Psoas muscle (tissue), 8 donors: ENCODE measurements at regions of chr2 and their contacts with region 1.

Region 1: GRCh38 chr2:73156539-73157124 is 43.9 kb upstream of the RAB11FIP5 start:
- DNase-seq: peak; percentile 67 to 78
- ATAC-seq: peak; percentile 72 to 97 (median 88)
- H3K4me3 ChIP-seq: no peak overlapping the region
- H3K27ac ChIP-seq: no peak overlapping the region
- H3K4me1 ChIP-seq: no peaks in the 10 kb centered on the region
- H3K27me3 ChIP-seq: peaks cover 0 to 17% (median 1%) of the 10 kb centered on the region in 3 donors
- CTCF ChIP-seq: peak; percentile 77

Region 2: GRCh38 chr2:72999729-73000725 is 156.6 kb before region 1 on chr2:
- intact Hi-C with region 1: no loop called
- DNase-seq: peak in 1 of 2 donors; percentile 30
- ATAC-seq: no peak
- H3K4me3 ChIP-seq: no peak overlapping the region
- H3K27ac ChIP-seq: no peak overlapping the region
- H3K4me1 ChIP-seq: no peaks in the 10 kb centered on the region
- H3K27me3 ChIP-seq: no peaks in the 10 kb centered on the region
- CTCF ChIP-seq: no peak

Region 3: DNA sequence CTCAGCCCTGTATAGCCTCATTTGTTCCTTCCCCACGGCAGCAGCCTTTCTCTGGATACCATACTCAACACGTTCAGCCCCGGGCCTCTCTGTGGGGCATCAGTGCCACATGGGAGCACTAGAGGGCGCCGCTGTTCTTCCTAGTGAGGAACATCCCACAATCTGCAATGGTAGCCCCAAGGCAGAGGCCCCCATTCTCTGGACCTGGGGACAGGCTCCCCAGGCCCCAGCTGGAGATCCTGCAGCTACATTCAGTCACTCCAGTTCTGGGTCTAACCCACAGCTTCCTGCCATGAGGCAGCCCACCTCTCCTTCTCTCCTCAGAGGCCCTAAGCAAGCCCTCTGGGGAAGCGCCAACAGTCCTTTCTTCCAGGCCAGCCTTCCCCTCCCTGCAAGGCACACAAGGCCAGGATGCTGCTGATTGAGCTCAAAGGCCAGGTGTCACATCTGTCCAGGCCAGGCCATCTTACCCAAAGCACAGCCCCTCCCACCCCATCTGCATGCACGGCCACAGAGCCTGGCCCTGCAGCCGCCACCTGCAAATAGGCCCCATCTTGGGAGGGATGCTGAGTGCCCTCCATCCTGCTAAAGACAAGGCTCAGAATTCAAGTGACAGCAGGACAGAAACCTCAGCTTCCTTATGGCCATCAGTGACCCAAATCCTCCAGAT is 70.8 kb before region 1 on chr2:
- intact Hi-C with region 1: loop called (anchors 2 kb)
- DNase-seq: peak; percentile 84 to 91
- ATAC-seq: peak; percentile 82 to 94 (median 86)
- H3K4me3 ChIP-seq: no peak overlapping the region
- H3K27ac ChIP-seq: no peak overlapping the region
- H3K4me1 ChIP-seq: no peaks in the 10 kb centered on the region
- H3K27me3 ChIP-seq: no peaks in the 10 kb centered on the region
- CTCF ChIP-seq: peak; percentile 95

Region 4: DNA sequence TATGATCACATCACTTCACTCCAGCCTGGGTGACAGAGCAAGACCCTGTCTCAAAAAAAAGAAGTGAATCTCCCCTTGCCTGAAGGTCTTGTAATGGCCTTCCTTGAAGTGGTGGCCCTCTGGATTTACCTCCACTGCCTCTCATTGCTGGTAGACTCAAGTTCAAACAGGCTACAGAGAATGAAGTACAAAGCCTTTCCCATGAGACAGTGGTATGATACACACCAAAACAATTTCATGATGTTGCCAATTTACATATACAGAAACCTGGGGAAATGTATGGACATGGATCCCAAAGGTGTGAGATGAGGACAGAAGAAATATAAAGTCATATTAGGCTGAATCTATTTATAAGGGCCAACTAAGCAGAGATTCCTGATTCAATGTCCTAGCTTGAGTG is 40.9 kb after region 1 on chr2:
- intact Hi-C with region 1: no loop called
- DNase-seq: no peak
- ATAC-seq: no peak
- H3K4me3 ChIP-seq: no peak overlapping the region
- H3K27ac ChIP-seq: no peak overlapping the region
- H3K4me1 ChIP-seq: peaks cover 3% of the 10 kb centered on the region
- H3K27me3 ChIP-seq: peaks cover 0 to 58% (median 2%) of the 10 kb centered on the region in 3 donors
- CTCF ChIP-seq: no peak

Region 5: GRCh38 chr2:73494031-73494430 is 337.4 kb after region 1 on chr2:
- intact Hi-C with region 1: no loop called
- DNase-seq: no peak
- ATAC-seq: no peak
- H3K4me3 ChIP-seq: no peak overlapping the region
- H3K27ac ChIP-seq: no peak overlapping the region
- H3K4me1 ChIP-seq: no peaks in the 10 kb centered on the region
- H3K27me3 ChIP-seq: no peaks in the 10 kb centered on the region
- CTCF ChIP-seq: no peak